ENCODE measurements at regions of chr7 and their contacts with region 1.

Region 1: DNA sequence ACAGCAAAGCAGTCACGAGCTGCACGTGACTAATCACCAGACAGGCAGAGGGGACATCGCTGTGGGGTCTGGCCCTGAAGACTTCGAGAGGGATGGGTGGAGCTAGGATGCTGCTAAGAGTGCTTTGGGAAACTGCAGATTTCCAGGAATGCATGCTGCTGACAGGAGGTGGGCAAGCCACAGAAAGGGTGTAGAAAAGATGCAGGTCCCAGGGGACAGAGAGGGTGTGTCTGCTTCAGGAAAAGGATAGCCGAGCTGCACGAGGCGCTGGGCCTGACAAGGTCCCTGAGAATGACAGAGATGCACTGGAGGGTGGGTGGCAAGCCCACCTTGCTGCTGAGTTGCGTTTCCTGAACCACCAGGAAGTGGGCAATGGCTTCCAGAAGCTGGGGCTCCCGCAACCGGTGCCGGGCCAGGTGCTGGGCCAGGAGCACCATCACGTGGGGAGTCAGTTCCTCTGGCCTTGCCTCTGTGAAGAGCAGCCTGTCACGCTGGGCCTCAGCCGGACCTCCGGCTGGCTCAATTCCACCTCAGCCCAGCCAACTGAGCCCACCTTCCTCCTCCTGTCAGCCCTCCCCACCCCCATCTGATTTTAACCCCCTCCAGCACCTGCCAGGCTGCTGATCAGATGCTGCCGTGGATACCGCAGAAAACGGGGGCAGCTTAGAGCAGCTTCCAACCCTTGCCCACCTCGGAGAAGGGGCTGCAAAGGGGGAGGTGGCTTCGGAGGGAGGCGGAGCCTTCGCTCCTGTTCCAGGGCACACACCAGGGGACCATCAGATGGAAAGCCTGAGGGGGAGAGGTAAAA is 2.2 kb downstream of the FASTK start:
- DNase-seq: peak in 2 of 6 donors; percentile 24 to 75
- ATAC-seq: no peak
- H3K4me3 ChIP-seq: no peak overlapping the region
- H3K27ac ChIP-seq: no peak overlapping the region
- H3K4me1 ChIP-seq: peaks cover 11 to 29% (median 16%) of the 10 kb centered on the region in 3 donors
- H3K27me3 ChIP-seq: no peaks in the 10 kb centered on the region
- CTCF ChIP-seq: no peak

Region 2: GRCh38 chr7:151064993-151065778 is 13.3 kb before region 1 on chr7:
- intact Hi-C with region 1: loop called in 1 of 3 experiments (anchors 2 kb)
- DNase-seq: no peak
- ATAC-seq: no peak
- H3K4me3 ChIP-seq: no peak overlapping the region
- H3K27ac ChIP-seq: no peak overlapping the region
- H3K4me1 ChIP-seq: peaks cover 9 to 26% (median 15%) of the 10 kb centered on the region in 3 donors
- H3K27me3 ChIP-seq: no peaks in the 10 kb centered on the region
- CTCF ChIP-seq: no peak

Region 3: DNA sequence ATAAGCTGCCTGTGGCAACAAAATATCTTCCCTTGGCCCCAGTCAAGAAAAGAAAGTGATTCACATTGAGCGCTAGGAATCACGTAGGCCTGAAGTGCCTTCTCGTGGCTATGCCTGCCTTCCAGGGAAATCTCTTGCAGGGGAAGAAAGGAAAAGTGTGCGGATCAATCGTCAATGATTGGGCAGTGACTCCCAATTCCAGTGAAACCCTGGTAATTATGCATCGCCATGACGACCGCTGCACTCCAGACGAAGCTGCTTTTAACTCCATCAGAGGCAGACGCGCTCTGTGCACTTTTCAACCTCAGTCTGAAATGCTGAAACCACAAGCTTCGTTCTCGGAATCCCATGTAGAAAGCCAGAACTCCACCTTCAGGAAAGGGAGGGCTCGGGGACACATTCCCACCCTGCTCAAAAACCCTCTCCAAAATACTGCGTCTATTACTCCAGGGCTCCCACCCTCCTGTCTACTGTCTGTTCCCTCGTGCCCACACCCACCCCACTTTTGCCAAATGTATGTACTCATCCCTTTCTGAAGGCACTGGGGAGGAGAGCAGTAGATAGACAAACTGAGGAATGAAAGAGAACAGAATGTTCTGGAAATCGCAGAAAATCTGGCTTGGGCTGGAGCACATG is 822.7 kb after region 1 on chr7:
- intact Hi-C with region 1: no loop called
- DNase-seq: peak in 1 of 6 donors; percentile 11
- ATAC-seq: peak in 3 of 4 donors; percentile 9 to 44 (median 17)
- H3K4me3 ChIP-seq: no peak overlapping the region
- H3K27ac ChIP-seq: no peak overlapping the region
- H3K4me1 ChIP-seq: peaks cover 0 to 4% (median 0%) of the 10 kb centered on the region in 3 donors
- H3K27me3 ChIP-seq: no peaks in the 10 kb centered on the region
- CTCF ChIP-seq: no peak

Measured in pancreas (tissue), 10 donors.